CD4-positive, alpha-beta memory T cell (primary cell): ENCODE measurements at regions of chr1 and their contacts with region 1.

Region 1: DNA sequence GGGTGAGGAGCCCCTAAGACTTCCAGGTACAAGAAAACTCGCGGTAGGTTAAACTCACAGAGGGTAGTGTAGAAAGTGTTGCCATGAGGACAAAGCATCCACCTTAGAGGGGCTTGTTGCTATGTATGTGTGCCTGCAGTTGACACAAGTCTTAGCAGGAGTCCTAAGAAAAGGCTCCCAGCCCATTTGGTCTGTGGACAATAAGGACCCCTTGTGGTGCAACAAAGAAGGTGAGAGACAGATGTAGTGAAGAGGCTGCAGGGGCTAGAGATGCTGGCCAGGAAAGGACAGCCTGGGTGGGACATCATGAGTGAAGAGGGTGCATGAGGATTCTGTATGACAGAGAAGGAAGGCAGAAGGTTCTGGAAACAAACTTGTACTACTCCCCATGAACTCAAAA is 36.3 kb upstream of the IL10 start:
- DNase-seq: peak; percentile 61 to 68 (median 63)
- H3K4me3 ChIP-seq: no peak overlapping the region
- H3K4me3 Mint-ChIP-seq: no peak overlapping the region
- H3K27ac ChIP-seq: no peak overlapping the region
- H3K27ac Mint-ChIP-seq: peak overlapping the region in 6 of 7 donors; percentile 20 to 90 (median 83)
- H3K4me1 ChIP-seq: peaks cover 35% of the 10 kb centered on the region
- H3K4me1 Mint-ChIP-seq: peaks cover 24 to 56% (median 43%) of the 10 kb centered on the region in 4 donors
- H3K27me3 ChIP-seq: no peaks in the 10 kb centered on the region
- H3K27me3 Mint-ChIP-seq: no peaks in the 10 kb centered on the region

Region 2: DNA sequence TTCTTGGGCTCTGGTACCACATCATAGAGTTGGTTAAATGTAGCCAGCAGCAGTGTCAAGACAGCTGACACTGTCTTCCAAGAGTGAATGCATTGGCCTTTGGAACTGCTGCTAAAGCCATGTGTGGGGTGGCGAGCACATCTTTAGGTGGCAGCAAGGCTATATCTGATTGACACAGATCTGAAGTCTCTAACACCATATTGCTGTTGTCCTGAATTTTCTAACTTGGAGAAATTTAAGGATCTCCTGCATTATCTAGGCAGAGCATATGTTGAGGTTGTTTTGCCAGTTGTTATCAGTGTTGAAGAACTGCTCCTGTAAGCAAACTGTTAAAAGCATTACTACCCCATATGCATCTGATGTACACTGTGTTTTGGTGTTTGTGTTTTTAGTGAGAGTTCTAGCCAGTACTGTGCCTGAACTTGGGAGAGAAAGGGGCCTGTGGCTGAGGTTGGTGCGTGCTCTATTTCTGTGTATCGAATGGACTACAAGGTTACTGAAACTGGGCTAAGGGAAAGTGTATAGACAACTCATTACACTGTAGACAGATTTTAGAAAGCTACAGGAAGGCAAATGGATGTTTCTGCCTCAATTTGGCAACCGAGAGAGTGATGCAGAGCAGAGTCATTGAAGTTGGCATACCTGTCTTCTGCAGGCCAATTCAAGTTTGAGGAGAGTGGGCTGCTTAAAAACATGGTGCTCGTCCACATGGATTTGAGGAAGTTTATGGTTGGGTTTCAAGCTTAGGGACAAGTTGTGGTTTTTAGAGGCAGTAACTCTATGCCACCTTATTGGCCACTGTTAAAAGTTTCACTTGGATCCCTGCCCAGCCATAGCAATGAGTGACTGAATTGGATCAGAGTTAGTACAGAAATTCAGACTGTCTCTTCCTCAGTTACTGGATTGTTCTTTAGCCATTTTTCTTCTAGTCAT is 156.4 kb before region 1 on chr1:
- CTCF ChIA-PET with region 1: no interaction called
- POLR2A ChIA-PET with region 1: no interaction called
- intact Hi-C with region 1: no loop called
- DNase-seq: no peak
- H3K4me3 ChIP-seq: no peak overlapping the region
- H3K4me3 Mint-ChIP-seq: no peak overlapping the region
- H3K27ac ChIP-seq: no peak overlapping the region
- H3K27ac Mint-ChIP-seq: no peak overlapping the region
- H3K4me1 ChIP-seq: no peaks in the 10 kb centered on the region
- H3K4me1 Mint-ChIP-seq: no peaks in the 10 kb centered on the region
- H3K27me3 ChIP-seq: no peaks in the 10 kb centered on the region
- H3K27me3 Mint-ChIP-seq: peaks cover 0 to 3% of the 10 kb centered on the region in 2 donors

Region 3: DNA sequence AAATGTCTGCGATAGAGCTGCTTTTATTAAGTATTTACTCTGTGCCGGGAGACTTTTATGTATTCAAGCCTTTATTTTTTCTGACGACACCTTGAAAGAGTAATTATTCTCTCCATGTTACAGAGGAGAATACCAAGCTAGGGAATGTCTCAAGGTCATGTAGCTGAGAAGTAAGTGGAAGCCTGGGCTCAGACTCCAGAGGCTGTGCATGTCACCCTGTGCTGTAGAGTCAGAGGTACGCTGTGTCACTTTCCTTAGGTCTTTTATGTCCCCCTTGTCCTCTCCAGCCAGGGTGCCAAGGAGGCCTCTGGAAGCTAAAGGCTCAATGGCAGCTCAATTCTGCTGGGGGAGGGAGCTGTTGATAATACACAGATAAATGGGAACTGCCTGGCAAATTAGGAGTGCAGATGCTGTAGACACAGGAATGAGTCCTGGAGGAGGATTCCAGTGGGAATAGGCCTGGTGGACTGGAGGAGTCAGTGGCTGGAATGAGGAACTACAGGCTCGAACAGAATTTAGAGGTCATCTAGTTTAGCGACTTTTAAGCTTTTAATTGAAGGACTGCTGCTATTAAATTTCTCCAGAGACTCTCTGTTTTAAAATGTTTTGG is 47.4 kb before region 1 on chr1:
- CTCF ChIA-PET with region 1: interaction called, 12 read pairs
- POLR2A ChIA-PET with region 1: interaction called, 141 read pairs
- intact Hi-C with region 1: loop called (anchors 1 kb)
- DNase-seq: no peak
- H3K4me3 ChIP-seq: no peak overlapping the region
- H3K4me3 Mint-ChIP-seq: peak overlapping the region in 1 of 8 donors; percentile 17
- H3K27ac ChIP-seq: no peak overlapping the region
- H3K27ac Mint-ChIP-seq: peak overlapping the region in 2 of 7 donors; percentile 51 to 82
- H3K4me1 ChIP-seq: peaks cover 63% of the 10 kb centered on the region
- H3K4me1 Mint-ChIP-seq: peaks cover 21 to 36% (median 31%) of the 10 kb centered on the region in 4 donors
- H3K27me3 ChIP-seq: no peaks in the 10 kb centered on the region
- H3K27me3 Mint-ChIP-seq: no peaks in the 10 kb centered on the region

Region 4: GRCh38 chr1:206918076-206918475 is 109.5 kb after region 1 on chr1:
- CTCF ChIA-PET with region 1: interaction called, 85 read pairs
- POLR2A ChIA-PET with region 1: interaction called, 24 read pairs
- intact Hi-C with region 1: loop called (anchors 2 kb)
- DNase-seq: no peak
- H3K4me3 ChIP-seq: peak overlapping the region; percentile 55 to 94
- H3K4me3 Mint-ChIP-seq: no peak overlapping the region
- H3K27ac ChIP-seq: peak overlapping the region; percentile 38
- H3K27ac Mint-ChIP-seq: peak overlapping the region; percentile 83 to 96 (median 94)
- H3K4me1 ChIP-seq: peaks cover 78% of the 10 kb centered on the region
- H3K4me1 Mint-ChIP-seq: peaks cover 59 to 67% (median 66%) of the 10 kb centered on the region in 4 donors
- H3K27me3 ChIP-seq: no peaks in the 10 kb centered on the region
- H3K27me3 Mint-ChIP-seq: no peaks in the 10 kb centered on the region